GM12878 (cell line): ENCODE measurements at regions of chrX and their contacts with region 1.

Region 1: DNA sequence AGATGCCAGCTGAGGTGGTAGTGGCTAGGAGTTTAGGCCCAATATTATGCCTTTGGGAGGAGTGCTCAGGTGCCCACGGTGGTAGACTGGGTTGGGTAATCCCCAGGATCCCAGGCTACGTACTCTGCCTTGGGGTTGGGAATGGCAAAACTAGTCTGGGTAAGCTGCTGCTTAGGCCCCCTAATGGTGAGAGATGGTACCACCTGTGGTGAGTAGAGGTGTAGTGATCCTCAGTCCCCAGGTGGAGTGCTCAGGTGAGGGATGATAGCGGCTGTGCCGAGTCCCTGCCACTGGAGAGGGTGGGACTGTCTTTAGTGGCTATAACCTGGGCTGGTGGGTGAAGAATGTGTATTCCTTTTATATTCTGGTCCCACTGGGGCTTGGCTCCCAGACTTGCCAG is 75.2 kb downstream of the IL1RAPL2 start:
- DNase-seq: no peak
- ATAC-seq: peak; percentile 48; the same call in 1 of the 3 replicates
- H3K4me3 ChIP-seq: no peak overlapping the region
- H3K27ac ChIP-seq: no peak overlapping the region
- H3K4me1 ChIP-seq: no peaks in the 10 kb centered on the region
- H3K27me3 ChIP-seq: no peaks in the 10 kb centered on the region
- CTCF ChIP-seq: 0 out of 6 replicates have a peak, but pooled peaks of 1 of the 3 experiments have one; percentile 6
- EP300 ChIP-seq: no peak
- POLR2A ChIP-seq: no peak
- RAD21 ChIP-seq: no peak

Region 2: GRCh38 chrX:104697294-104697693 is 56.1 kb after region 1 on chrX:
- CTCF ChIA-PET with region 1: no interaction called
- POLR2A ChIA-PET with region 1: no interaction called
- RAD21 ChIA-PET with region 1: no interaction called
- SMC1A ChIA-PET with region 1: no interaction called
- in situ Hi-C with region 1: no loop called
- intact Hi-C with region 1: loop called (anchors 10 kb)
- DNase-seq: no peak
- ATAC-seq: no peak
- H3K4me3 ChIP-seq: no peak overlapping the region
- H3K27ac ChIP-seq: no peak overlapping the region
- H3K4me1 ChIP-seq: no peaks in the 10 kb centered on the region
- H3K27me3 ChIP-seq: no peaks in the 10 kb centered on the region
- CTCF ChIP-seq: no peak
- EP300 ChIP-seq: no peak
- POLR2A ChIP-seq: no peak
- RAD21 ChIP-seq: no peak